IMR-90 (cell line): ENCODE measurements at regions of chr5 and their contacts with region 1.

Region 1: DNA sequence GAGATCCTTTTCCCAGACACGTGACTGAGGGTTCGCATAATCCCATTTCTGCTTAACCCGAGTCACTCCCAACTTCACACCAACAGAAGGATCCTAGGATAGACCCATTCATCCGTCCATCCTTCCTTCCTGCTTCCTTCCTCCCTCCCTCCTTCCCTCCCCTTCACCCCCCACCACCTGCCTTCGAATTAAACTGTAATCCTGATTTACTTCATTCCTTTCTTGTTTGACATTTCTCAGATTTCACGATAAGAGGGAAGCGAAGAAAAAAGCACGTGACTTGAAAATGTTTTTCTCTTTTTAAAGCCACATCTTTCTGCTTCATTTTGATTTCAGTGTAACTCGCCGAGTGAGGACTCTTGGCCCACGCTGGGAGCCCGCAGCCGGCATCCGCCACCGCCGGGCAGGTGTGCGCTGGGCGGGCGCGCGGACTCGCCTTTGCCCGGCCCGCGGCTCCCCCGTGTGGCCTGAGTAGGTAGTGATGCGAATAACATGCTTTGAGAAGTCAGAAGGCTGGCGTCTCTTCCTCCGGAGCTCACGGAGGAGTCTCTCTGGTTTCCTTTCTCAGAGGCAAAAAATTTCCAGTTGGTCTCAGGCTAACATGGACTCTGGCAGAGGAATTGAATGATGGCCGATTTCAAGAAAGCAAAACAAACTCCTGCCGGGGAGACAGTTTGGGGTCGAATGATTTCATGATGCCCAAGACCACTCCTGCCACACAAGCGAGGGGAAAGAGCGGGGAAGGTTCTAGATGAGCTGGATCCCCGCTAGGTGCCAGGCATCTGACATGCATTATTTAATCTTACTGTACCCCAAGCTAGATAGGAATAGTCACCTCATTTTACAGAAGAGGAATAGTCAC is 117.7 kb downstream of the SLC12A2 start:
- DNase-seq: peak; percentile 50
- ATAC-seq: peak; percentile 90
- H3K4me3 ChIP-seq: peak overlapping the region; percentile 20; the same call in 1 of the 2 replicates
- H3K27ac ChIP-seq: no peak overlapping the region
- H3K4me1 ChIP-seq: peaks cover 5% of the 10 kb centered on the region
- H3K27me3 ChIP-seq: peaks cover 2% of the 10 kb centered on the region
- CTCF ChIP-seq: peak; percentile 88
- POLR2A ChIP-seq: no peak
- RAD21 ChIP-seq: peak; percentile 94

Region 2: DNA sequence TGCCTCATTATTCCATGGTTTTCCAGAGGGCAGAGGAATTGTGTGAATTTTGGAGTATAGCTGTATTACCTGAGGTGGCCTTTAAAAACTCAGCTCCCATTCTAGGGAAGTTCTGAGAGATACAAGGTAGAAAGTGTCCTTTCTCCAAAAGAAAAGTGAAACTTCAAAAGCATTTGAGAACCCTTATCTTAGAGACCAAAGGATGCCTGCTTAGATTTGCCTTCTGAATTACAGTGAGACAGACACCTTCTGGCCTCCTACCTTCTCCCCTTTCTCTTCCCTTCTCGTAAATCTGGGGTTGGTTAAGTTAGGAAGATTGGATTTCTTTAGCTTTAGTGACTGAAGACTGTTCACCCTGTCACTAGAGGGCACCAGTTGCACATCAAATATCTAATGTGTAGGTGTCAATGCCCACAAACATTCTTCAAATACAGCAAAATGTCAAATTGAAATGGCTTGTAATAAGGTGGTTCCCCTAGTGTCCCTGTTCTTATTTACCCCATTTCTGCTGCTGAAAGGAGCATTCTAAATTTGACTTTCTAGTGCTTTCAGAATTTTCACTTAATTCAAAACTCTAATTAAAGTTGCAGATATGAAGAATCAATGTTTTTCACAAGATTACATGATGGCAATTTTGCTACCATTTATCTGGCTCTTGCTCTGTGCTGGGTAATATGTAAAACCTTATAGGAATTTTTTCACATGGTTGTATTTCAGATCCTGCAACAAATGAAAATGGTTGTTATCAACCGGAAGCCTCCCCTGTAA is 637.1 kb before region 1 on chr5:
- CTCF ChIA-PET with region 1: interaction called, 9 read pairs
- POLR2A ChIA-PET with region 1: no interaction called
- dilution Hi-C with region 1: no loop called
- in situ Hi-C with region 1: loop called (anchors 5 kb)
- intact Hi-C with region 1: loop called (anchors 1 kb)
- DNase-seq: peak; percentile 53
- ATAC-seq: peak; percentile 48
- H3K4me3 ChIP-seq: no peak overlapping the region
- H3K27ac ChIP-seq: no peak overlapping the region
- H3K4me1 ChIP-seq: peaks cover 10% of the 10 kb centered on the region
- H3K27me3 ChIP-seq: peaks cover 4% of the 10 kb centered on the region; the same call in 1 of the 2 replicates
- CTCF ChIP-seq: peak; percentile 66
- POLR2A ChIP-seq: no peak
- RAD21 ChIP-seq: peak; percentile 76

Region 3: GRCh38 chr5:127757576-127757975 is 443.7 kb before region 1 on chr5:
- CTCF ChIA-PET with region 1: interaction called, 4 read pairs
- POLR2A ChIA-PET with region 1: no interaction called
- dilution Hi-C with region 1: no loop called
- in situ Hi-C with region 1: loop called (anchors 5 kb)
- intact Hi-C with region 1: no loop called
- DNase-seq: peak; percentile 65
- ATAC-seq: no peak
- H3K4me3 ChIP-seq: no peak overlapping the region
- H3K27ac ChIP-seq: no peak overlapping the region
- H3K4me1 ChIP-seq: peaks cover 3% of the 10 kb centered on the region
- H3K27me3 ChIP-seq: no peaks in the 10 kb centered on the region
- CTCF ChIP-seq: peak; percentile 54
- POLR2A ChIP-seq: no peak
- RAD21 ChIP-seq: peak; percentile 76

Region 4: GRCh38 chr5:127885176-127885575 is 316.1 kb before region 1 on chr5:
- CTCF ChIA-PET with region 1: no interaction called
- POLR2A ChIA-PET with region 1: no interaction called
- dilution Hi-C with region 1: no loop called
- in situ Hi-C with region 1: loop called (anchors 10 kb)
- intact Hi-C with region 1: no loop called
- DNase-seq: no peak
- ATAC-seq: no peak
- H3K4me3 ChIP-seq: no peak overlapping the region
- H3K27ac ChIP-seq: no peak overlapping the region
- H3K4me1 ChIP-seq: no peaks in the 10 kb centered on the region
- H3K27me3 ChIP-seq: no peaks in the 10 kb centered on the region
- CTCF ChIP-seq: no peak
- POLR2A ChIP-seq: no peak
- RAD21 ChIP-seq: no peak

Region 5: DNA sequence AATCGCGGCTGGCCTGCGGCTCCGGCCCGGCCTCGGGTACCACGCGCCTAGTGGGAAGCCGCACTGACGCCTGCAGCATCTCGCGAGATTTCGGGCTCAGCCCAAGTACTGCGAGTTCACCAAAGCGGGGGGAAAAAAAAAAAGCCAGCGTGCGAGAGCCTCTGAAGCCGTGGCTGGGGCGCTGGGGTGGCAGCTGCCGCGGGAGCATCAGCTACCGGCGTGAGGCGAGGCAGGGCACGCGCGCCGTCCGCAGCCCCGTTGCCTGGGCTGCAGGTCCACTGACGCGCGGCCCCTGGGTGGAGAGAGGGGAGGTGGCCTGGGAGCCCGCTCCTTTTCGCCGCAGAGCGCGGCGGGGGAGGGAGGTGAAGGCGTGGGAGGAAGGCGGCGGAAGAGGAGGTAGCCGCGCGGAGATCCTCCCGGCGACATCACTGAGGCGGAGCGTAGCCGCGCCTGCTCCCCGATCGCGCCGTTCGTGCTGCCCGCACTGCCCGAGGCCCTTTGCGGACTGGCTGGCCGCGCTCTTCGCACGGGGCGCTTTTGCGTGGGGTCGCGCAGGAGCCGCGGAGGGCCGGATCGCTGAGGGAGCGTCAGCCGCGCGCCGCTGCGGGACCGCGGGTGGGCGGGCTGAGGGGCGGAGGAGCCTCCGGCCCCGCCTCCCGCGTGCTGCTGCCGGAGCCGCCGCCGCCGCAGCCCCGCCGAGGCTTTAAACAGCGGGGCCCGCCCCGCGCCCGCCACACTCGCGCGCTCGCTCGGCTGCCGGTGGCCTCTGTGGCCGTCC is 118.1 kb before region 1 on chr5 and contains the start of gene SLC12A2:
- CTCF ChIA-PET with region 1: interaction called, 4 read pairs
- POLR2A ChIA-PET with region 1: no interaction called
- dilution Hi-C with region 1: no loop called
- in situ Hi-C with region 1: no loop called
- intact Hi-C with region 1: loop called (anchors 2 kb)
- DNase-seq: peak; percentile 96
- ATAC-seq: peak; percentile 86
- H3K4me3 ChIP-seq: peak within 1 kb of the TSS; percentile 89
- H3K27ac ChIP-seq: peak within 1 kb of the TSS; percentile 92
- H3K4me1 ChIP-seq: no peaks in the 10 kb centered on the region
- H3K27me3 ChIP-seq: no peaks in the 10 kb centered on the region
- CTCF ChIP-seq: no peak
- POLR2A ChIP-seq: peak; percentile 89
- RAD21 ChIP-seq: no peak
- total RNA-seq, gene SLC12A2: 30.3 and 42.2 TPM in 2 replicates